Sigmoid colon (tissue), 7 donors: ENCODE measurements at regions of chr3 and their contacts with region 1.

Region 1: GRCh38 chr3:98522244-98523090 is at the start of gene CLDND1:
- DNase-seq: peak; percentile 98
- H3K4me3 ChIP-seq: peak within 1 kb of the TSS; percentile 62 to 89 (median 76)
- H3K27ac ChIP-seq: peak within 1 kb of the TSS; percentile 92 to 96 (median 94)
- H3K4me1 ChIP-seq: peaks cover 0 to 31% (median 19%) of the 10 kb centered on the region in 4 donors
- H3K27me3 ChIP-seq: no peaks in the 10 kb centered on the region
- CTCF ChIP-seq: no peak
- EP300 ChIP-seq: peak in 1 of 4 donors; percentile 67
- POLR2A ChIP-seq: peak; percentile 72 to 75
- total RNA-seq, gene CLDND1: 193 to 301 (median 240) TPM

Region 2: GRCh38 chr3:97764407-97765238 is 757.8 kb before region 1 on chr3 and contains the start of gene ARL6:
- intact Hi-C with region 1: loop called (anchors 10 kb)
- DNase-seq: peak; percentile 90
- H3K4me3 ChIP-seq: peak within 1 kb of the TSS; percentile 70 to 83 (median 76)
- H3K27ac ChIP-seq: peak within 1 kb of the TSS; percentile 74 to 83 (median 79)
- H3K4me1 ChIP-seq: peaks cover 0 to 23% (median 14%) of the 10 kb centered on the region in 4 donors
- H3K27me3 ChIP-seq: no peaks in the 10 kb centered on the region
- CTCF ChIP-seq: no peak
- EP300 ChIP-seq: no peak
- POLR2A ChIP-seq: no peak
- total RNA-seq, gene ARL6: 8.6 to 11.1 (median 9.9) TPM

Region 3: DNA sequence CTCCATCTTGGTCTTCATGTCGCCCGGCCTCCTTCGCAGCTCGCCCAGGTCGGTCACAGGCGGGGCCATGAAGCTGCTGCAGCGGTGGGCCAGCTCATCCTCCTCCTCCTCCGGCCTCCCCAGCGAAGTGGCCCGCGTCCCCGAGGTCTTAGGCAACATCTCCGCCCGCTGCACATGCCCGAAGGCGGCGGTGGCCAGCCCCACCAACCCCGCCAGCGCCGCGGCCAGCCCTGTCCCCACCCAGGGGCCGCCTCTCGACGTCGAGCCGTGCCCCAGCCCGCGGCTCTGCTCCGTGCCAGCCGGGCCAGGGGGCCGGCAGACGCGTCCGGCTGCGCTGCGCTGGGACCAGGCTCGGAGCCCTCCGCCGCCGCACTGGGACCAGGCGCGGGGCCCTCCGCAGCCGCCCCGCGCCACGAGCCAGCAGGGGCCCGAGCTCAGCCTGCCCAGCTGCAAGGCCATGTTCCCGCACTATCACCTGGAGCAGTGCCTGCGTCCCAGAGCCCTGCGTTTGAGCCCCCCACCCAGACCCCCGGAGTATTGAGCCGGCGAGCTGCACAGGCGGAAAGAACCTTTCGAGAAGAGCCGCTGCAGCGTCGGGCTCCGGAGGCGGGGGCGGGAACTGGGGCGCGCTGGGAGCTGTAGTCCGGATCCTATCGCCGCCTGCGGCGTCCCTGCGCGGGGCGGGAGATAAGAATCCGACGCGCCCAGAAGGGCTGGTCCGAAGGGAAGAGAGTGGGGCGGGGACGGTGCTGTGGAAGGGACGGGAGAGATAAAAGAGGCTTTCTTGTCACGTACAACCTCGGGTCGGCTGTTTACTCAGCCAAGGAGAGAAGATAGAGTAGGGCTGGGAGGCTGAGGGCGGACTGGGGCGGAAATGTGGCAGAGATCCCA is 70.8 kb after region 1 on chr3 and contains the start of gene CPOX:
- intact Hi-C with region 1: loop called (anchors 1 kb)
- DNase-seq: peak; percentile 92
- H3K4me3 ChIP-seq: peak within 1 kb of the TSS; percentile 70 to 87 (median 78)
- H3K27ac ChIP-seq: peak within 1 kb of the TSS; percentile 80 to 85 (median 82)
- H3K4me1 ChIP-seq: peaks cover 0 to 18% (median 14%) of the 10 kb centered on the region in 4 donors
- H3K27me3 ChIP-seq: no peaks in the 10 kb centered on the region
- CTCF ChIP-seq: no peak
- EP300 ChIP-seq: no peak
- POLR2A ChIP-seq: peak in 1 of 2 donors; percentile 17
- total RNA-seq, gene CPOX: 15.3 to 32.7 (median 17.3) TPM

Region 4: DNA sequence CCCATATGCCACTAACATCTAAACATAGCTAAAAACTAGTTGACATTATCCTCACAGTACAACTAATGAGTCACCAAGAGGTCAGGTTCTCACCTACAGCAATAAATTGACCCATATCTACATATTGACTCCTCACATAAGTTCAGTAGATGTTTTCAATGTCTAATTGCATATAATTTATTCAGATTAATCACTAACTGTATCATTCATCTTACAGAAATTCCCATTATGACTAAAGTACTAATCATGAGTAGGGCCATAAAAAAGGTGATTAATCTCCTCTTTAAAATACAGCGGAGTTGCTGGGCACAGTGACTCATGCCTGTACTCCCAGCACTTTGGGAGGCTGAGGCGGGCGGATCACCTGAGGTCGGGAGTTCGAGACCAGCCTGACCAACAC is 158.3 kb after region 1 on chr3:
- intact Hi-C with region 1: no loop called
- DNase-seq: no peak
- H3K4me3 ChIP-seq: no peak overlapping the region
- H3K27ac ChIP-seq: no peak overlapping the region
- H3K4me1 ChIP-seq: no peaks in the 10 kb centered on the region
- H3K27me3 ChIP-seq: no peaks in the 10 kb centered on the region
- CTCF ChIP-seq: no peak
- EP300 ChIP-seq: no peak
- POLR2A ChIP-seq: no peak

Region 5: GRCh38 chr3:98901392-98902350 is 379.2 kb after region 1 on chr3 and contains the start of gene DCBLD2:
- intact Hi-C with region 1: loop called (anchors 5 kb)
- DNase-seq: peak; percentile 99
- H3K4me3 ChIP-seq: peak within 1 kb of the TSS; percentile 93 to 98 (median 96)
- H3K27ac ChIP-seq: peak within 1 kb of the TSS; percentile 96 to 98 (median 96)
- H3K4me1 ChIP-seq: peaks cover 0 to 41% (median 25%) of the 10 kb centered on the region in 4 donors
- H3K27me3 ChIP-seq: no peaks in the 10 kb centered on the region
- CTCF ChIP-seq: no peak
- EP300 ChIP-seq: no peak
- POLR2A ChIP-seq: peak; percentile 45 to 73
- total RNA-seq, gene DCBLD2: 38.8 to 56.5 (median 51.3) TPM

Region 6: DNA sequence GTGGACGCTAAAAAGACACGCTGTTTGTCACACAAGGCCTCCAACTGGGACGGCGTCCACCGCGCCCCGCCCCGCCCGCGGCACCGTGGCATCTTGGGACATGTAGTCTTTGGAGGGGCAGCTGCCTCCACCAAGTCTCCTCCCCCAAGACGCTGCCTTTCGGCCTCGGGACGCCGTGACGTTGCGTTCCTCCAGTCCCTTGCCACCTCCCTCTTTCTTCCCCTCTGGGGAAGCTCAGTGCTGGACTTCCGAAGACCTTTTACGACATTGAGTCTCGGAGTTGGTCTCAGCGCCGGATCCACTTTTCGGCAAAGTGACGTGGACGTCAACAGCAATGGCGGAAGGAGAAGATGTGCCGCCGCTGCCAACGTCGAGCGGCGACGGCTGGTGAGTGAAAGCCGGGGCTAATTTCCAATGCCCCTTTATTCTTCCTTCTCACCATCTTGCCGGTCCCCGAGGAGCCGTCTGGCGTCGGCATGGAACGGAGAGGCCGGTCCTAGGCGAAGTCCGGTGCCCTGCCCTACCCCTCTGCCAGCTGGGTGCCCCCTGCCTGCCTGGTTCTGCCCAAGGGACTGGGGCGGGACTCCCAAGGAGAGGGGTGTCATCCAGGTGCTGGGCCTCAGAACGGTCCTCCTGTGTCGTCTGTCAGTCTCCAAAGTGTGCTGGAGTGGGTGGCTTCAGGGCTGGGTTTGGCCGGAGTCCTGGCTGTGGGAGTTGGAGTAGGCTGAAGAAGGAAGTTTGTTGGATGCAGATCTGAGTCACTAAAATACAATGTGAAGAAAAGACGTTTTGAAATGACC is 1738.4 kb after region 1 on chr3 and contains the start of gene TBC1D23:
- intact Hi-C with region 1: loop called (anchors 10 kb)
- DNase-seq: peak; percentile 100
- H3K4me3 ChIP-seq: peak within 1 kb of the TSS; percentile 81 to 100 (median 99)
- H3K27ac ChIP-seq: peak within 1 kb of the TSS; percentile 96 to 99 (median 96)
- H3K4me1 ChIP-seq: peaks cover 0 to 45% (median 42%) of the 10 kb centered on the region in 4 donors
- H3K27me3 ChIP-seq: no peaks in the 10 kb centered on the region
- CTCF ChIP-seq: no peak
- EP300 ChIP-seq: peak in 1 of 4 donors; percentile 82
- POLR2A ChIP-seq: peak; percentile 80 to 84
- total RNA-seq, gene TBC1D23: 31.3 to 34.9 (median 32.7) TPM